Activated CD4-positive, alpha-beta T cell treated with anti-CD3 and anti-CD28 coated beads, Interleukin-2, amount 10 ng/mL, durations not matched to agents 24 days and 14 days (primary cell): ENCODE measurements at regions of chr12 and their contacts with region 1.

Region 1: GRCh38 chr12:56359851-56360767 is at the start of gene STAT2:
- DNase-seq: peak; percentile 100
- H3K4me3 Mint-ChIP-seq: peak within 1 kb of the TSS; percentile 94
- H3K27ac Mint-ChIP-seq: peak within 1 kb of the TSS; percentile 95
- H3K4me1 Mint-ChIP-seq: peaks cover 31% of the 10 kb centered on the region
- H3K27me3 Mint-ChIP-seq: no peaks in the 10 kb centered on the region
- total RNA-seq, gene STAT2: 64.9 and 68.4 TPM in 2 replicates

Region 2: DNA sequence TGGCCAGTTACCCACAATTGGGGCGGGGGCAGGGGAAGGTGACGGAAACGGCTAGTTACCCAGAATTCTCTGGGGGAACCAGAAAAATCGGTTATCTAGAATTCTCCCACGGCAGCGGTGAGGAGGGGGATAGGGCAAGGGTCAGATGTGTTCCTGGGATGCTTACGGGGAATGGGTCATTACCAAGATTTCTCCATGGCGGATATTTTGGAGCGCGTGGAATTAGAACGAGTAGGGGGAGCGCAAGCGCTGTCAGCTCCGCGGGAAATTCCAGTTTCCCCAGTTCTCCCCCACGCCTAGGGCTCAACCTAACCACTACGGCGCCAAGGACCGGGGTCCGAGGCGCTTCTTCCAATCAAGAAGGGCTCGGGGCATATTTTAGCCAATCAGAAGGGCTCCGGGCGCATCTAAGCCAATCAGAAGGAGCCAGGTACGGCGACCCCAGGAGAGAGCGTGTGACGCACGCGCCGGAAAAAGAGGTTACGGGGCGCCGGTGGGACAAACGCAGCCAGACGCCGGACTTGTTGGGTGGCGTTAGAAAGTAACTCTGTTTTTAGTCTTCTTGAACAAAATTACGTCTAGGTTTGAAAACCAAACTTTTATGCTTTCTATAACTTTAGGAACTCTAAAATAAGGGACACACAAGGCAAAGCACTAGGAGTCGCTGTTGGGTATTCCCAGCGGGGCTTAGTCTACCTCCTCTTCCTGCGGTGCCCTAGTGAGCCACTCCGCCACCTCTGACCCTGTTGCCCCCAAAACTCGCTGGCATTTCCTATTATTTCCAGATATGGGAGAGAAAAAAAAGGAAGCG is 26.2 kb before region 1 on chr12 and contains the start of gene PAN2:
- intact Hi-C with region 1: loop called (anchors 1 kb)
- DNase-seq: peak; percentile 98
- H3K4me3 Mint-ChIP-seq: peak within 1 kb of the TSS; percentile 88
- H3K27ac Mint-ChIP-seq: peak within 1 kb of the TSS; percentile 99
- H3K4me1 Mint-ChIP-seq: peaks cover 42% of the 10 kb centered on the region
- H3K27me3 Mint-ChIP-seq: no peaks in the 10 kb centered on the region
- total RNA-seq, gene PAN2: 31.3 and 34.7 TPM in 2 replicates

Region 3: DNA sequence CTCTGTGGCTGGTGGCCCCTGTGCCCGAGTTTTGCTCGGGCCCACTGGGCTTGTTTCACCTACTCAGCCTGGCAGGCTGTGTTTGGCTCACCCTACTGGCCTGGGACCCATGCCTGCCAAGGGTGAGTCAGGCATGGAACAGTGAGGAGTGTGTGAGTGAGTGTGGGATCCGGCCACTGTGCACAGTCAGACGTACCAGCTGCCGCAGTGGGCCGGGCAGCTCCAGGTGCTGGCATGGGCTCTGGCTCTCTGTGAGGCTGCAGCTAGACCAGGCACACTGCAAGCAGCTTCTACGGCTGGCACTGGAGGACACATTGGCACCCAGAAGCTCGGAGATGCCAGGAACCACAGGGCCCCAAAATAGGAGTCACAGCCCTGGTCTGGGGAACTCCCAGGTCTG is 443.6 kb after region 1 on chr12:
- intact Hi-C with region 1: no loop called
- DNase-seq: no peak
- H3K4me3 Mint-ChIP-seq: no peak overlapping the region
- H3K27ac Mint-ChIP-seq: no peak overlapping the region
- H3K4me1 Mint-ChIP-seq: no peaks in the 10 kb centered on the region
- H3K27me3 Mint-ChIP-seq: no peaks in the 10 kb centered on the region